ENCODE measurements at regions of chr5 and their contacts with region 1.

Region 1: GRCh38 chr5:134511788-134512650 is 13.5 kb upstream of the JADE2 start:
- DNase-seq: peak in 1 of 2 experiments; percentile 73
- H3K4me3 ChIP-seq: peak overlapping the region in 2 of 4 experiments; percentile 20 to 32; a peak in 3 of 8 replicates
- H3K27ac ChIP-seq: peak overlapping the region; percentile 77
- H3K4me1 ChIP-seq: peaks cover 16 to 23% (median 19%) of the 10 kb centered on the region in 4 experiments
- H3K27me3 ChIP-seq: no peaks in the 10 kb centered on the region
- CTCF ChIP-seq: peak; percentile 49 to 56 (median 54)
- EP300 ChIP-seq: no peak
- POLR2A ChIP-seq: peak; percentile 52 to 63
- RAD21 ChIP-seq: peak; percentile 61 to 73

Region 2: DNA sequence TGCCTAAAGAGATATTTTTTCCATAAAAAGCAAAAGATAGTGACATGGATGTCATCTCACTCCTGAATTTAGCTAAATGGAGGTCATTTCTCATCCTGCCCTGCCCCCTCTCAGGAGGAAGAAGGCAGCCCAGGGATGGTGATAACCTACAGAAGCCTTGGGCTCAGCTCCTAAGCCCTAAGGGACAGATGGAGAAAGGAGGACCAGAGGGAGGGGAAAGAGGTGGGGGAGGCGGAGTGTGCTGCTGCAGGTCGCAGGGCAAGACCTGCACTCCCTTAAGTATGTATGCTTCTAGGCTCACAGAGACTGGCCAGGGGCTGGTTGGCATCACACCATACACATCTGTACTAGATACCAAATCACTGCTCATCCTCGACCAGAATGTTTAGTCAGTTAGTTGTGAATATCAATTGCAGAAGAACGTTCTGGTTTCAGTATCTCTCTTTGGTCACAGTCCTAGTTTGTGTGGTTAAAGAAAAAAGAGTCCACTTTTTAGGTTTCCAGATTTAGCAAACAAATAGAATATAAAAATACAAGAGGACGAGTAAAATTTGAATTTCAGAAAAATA is 81.9 kb before region 1 on chr5:
- CTCF ChIA-PET with region 1: interaction called, 5 read pairs
- POLR2A ChIA-PET with region 1: interaction called, 31 read pairs
- DNase-seq: no peak
- H3K4me3 ChIP-seq: peak overlapping the region in 1 of 4 experiments; percentile 44; a peak in 2 of 8 replicates
- H3K27ac ChIP-seq: no peak overlapping the region
- H3K4me1 ChIP-seq: peaks cover 6 to 27% (median 16%) of the 10 kb centered on the region in 4 experiments; a peak in 6 of 7 replicates
- H3K27me3 ChIP-seq: peaks cover 0 to 1% (median 0%) of the 10 kb centered on the region in 4 experiments; a peak in 1 of 7 replicates
- CTCF ChIP-seq: peak in 1 of 3 experiments; percentile 7; a peak in 1 of 4 replicates
- EP300 ChIP-seq: no peak
- POLR2A ChIP-seq: no peak
- RAD21 ChIP-seq: no peak; a peak in 1 of 4 replicates

Region 3: DNA sequence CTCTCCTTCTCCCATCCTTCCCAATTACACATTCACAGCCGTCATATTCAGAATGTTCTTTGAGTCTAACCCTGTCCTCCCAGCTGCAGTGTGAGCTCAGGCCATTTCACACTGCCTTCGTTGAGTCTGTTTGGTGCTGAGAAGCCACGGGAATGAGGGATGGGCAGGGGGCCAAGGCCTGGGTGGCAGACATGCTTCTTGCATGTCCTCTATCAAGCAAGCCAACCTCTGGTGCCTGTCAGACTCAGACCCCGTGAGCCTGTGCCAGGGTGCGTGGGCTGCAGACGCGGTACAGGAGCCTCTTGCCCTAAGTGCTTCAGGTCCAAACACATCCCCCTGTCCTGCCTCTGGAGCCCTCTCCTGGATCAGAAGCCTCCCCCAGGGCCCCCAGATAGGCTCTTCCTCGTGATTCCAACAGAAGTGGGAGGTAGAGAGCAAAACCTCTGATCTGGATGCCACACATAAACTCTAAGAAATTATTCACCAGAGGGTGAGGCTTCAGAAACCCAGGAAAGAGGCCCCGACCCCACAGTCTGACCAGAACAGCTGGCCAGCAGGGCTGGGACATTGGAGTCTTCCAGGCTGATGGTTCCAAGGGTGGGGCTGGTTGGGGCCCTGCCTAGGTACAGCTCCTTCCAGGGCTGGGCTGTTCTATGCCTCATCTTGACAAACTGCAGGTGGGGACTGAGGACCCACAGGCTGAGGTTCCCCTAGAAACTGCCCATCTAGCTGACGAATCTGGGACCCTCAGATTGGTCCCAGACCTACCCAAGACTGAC is 53.6 kb before region 1 on chr5:
- CTCF ChIA-PET with region 1: interaction called, 10 read pairs
- POLR2A ChIA-PET with region 1: interaction called, 13 read pairs
- DNase-seq: no peak
- H3K4me3 ChIP-seq: no peak overlapping the region
- H3K27ac ChIP-seq: no peak overlapping the region
- H3K4me1 ChIP-seq: peaks cover 0 to 4% (median 0%) of the 10 kb centered on the region in 4 experiments; a peak in 1 of 7 replicates
- H3K27me3 ChIP-seq: no peaks in the 10 kb centered on the region
- CTCF ChIP-seq: no peak
- EP300 ChIP-seq: no peak
- POLR2A ChIP-seq: no peak
- RAD21 ChIP-seq: no peak

Region 4: DNA sequence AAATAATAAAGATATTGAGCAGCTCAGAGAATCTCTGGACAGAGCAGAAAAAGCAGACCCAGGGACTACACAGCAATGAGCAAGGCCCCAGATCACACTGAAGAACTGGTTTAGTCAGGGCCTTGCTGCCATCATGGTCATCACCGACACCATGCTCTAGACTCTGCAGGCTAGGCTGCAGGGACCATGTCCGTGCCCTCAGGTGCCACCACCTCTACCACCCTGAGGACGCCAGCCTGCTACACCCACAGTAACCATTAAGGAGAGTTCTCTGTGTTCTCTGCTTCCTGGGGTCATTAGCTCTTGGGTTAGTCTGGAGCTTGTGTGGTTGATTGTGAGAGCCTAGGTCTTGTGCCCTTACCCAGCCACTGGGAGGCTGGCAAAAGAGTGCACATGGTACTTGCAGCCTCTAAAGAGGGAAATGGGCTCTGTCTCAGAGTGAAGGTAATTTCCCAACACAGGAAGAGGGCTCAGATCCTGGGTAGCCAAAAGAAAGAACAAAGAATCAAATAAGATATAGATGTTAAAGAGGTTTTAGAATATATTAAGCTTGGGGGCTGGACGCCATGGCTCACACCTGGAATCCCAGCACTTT is 18.5 kb before region 1 on chr5:
- CTCF ChIA-PET with region 1: interaction called, 4 read pairs
- POLR2A ChIA-PET with region 1: interaction called, 12 read pairs
- DNase-seq: no peak
- H3K4me3 ChIP-seq: no peak overlapping the region
- H3K27ac ChIP-seq: no peak overlapping the region
- H3K4me1 ChIP-seq: no peaks in the 10 kb centered on the region
- H3K27me3 ChIP-seq: no peaks in the 10 kb centered on the region
- CTCF ChIP-seq: no peak
- EP300 ChIP-seq: no peak
- POLR2A ChIP-seq: no peak
- RAD21 ChIP-seq: no peak

Region 5: GRCh38 chr5:134541736-134542376 is 29.8 kb after region 1 on chr5:
- CTCF ChIA-PET with region 1: interaction called, 5 read pairs
- POLR2A ChIA-PET with region 1: interaction called, 17 read pairs
- DNase-seq: peak in 1 of 2 experiments; percentile 85
- H3K4me3 ChIP-seq: no peak overlapping the region
- H3K27ac ChIP-seq: no peak overlapping the region
- H3K4me1 ChIP-seq: peaks cover 6 to 17% (median 9%) of the 10 kb centered on the region in 4 experiments
- H3K27me3 ChIP-seq: no peaks in the 10 kb centered on the region
- CTCF ChIP-seq: no peak
- EP300 ChIP-seq: no peak
- POLR2A ChIP-seq: no peak
- RAD21 ChIP-seq: peak in 1 of 2 experiments; percentile 23; a peak in 2 of 4 replicates

Region 6: DNA sequence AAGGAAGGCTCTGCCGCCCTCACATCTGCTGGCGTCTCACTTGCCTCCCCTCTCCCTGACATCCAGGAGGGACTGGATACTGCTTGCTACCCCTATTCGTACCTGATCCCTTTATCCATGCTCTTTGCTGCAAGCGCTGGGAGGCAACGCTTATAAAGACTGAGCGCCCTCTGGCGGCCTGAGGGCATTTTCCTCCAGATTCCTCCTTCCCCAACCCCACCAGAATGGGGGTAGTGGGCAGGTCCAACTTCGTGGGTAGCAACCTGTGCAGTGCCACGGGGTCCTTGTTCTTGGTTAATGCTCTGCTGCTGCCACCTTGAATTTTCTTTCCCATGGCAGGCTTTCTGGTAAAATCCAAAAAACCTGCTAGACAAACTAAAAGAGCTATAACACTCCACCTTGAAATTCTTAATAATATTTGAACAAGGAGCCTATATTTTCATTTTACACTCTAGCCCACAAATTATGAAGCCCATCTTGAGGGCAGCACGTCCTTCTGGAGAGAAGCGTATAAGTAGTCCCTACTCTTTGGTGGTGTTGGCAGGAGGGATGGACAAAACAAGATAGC is 65.9 kb after region 1 on chr5:
- CTCF ChIA-PET with region 1: interaction called, 14 read pairs
- POLR2A ChIA-PET with region 1: interaction called, 5 read pairs
- DNase-seq: peak; percentile 69 to 94
- H3K4me3 ChIP-seq: no peak overlapping the region
- H3K27ac ChIP-seq: no peak overlapping the region
- H3K4me1 ChIP-seq: no peaks in the 10 kb centered on the region; a peak in 1 of 7 replicates
- H3K27me3 ChIP-seq: no peaks in the 10 kb centered on the region
- CTCF ChIP-seq: peak in 2 of 3 experiments; percentile 93 to 98; a peak in 3 of 4 replicates
- EP300 ChIP-seq: no peak
- POLR2A ChIP-seq: no peak
- RAD21 ChIP-seq: peak; percentile 92 to 93